Ascending aorta (tissue), 2 donors: ENCODE measurements at regions of chr6 and their contacts with region 1.

Region 1: GRCh38 chr6:122033539-122034181 is 365.8 kb upstream of the HSF2 start:
- DNase-seq: no peak
- H3K4me3 ChIP-seq: no peak overlapping the region
- H3K27ac ChIP-seq: no peak overlapping the region
- H3K4me1 ChIP-seq: peaks cover 0 to 2% of the 10 kb centered on the region in 2 donors
- H3K27me3 ChIP-seq: no peaks in the 10 kb centered on the region
- CTCF ChIP-seq: peak; percentile 60 to 71 (median 66)

Region 2: DNA sequence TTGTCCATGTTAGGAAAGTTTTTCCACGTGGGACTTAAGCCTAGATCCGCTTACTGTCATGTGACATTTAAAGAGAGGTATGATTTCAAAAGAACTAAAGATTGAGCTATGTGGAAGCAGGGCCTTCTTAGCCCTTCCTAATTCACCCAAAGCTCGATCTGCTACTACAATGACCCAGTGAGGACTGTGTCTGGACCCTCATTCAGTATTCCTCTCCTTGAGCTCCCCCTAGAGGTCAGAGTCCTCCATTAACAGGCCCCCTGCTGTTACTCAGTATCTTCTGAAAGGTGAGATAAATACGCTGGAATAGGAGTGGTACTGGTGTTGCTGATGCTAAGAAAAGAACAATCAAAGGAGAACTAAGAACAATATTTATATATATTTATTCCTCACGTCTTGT is 184.2 kb before region 1 on chr6:
- intact Hi-C with region 1: loop called (anchors 5 kb)
- DNase-seq: peak in 1 of 2 donors; percentile 74
- H3K4me3 ChIP-seq: no peak overlapping the region
- H3K27ac ChIP-seq: no peak overlapping the region
- H3K4me1 ChIP-seq: no peaks in the 10 kb centered on the region
- H3K27me3 ChIP-seq: no peaks in the 10 kb centered on the region
- CTCF ChIP-seq: peak; percentile 45 to 67 (median 67)

Region 3: GRCh38 chr6:122184401-122184827 is 150.8 kb after region 1 on chr6:
- intact Hi-C with region 1: loop called (anchors 10 kb)
- DNase-seq: no peak
- H3K4me3 ChIP-seq: peak overlapping the region; percentile 39 to 50
- H3K27ac ChIP-seq: no peak overlapping the region
- H3K4me1 ChIP-seq: no peaks in the 10 kb centered on the region
- H3K27me3 ChIP-seq: no peaks in the 10 kb centered on the region
- CTCF ChIP-seq: peak; percentile 27 to 55 (median 36)